ENCODE measurements at regions of chr18 and their contacts with region 1.

Region 1: GRCh38 chr18:24118750-24119577 is 19.9 kb upstream of the CABYR start:
- DNase-seq: peak; percentile 87
- ATAC-seq: peak; percentile 81
- H3K4me3 Mint-ChIP-seq: no peak overlapping the region
- H3K27ac Mint-ChIP-seq: no peak overlapping the region
- H3K4me1 Mint-ChIP-seq: peaks cover 20% of the 10 kb centered on the region
- H3K27me3 Mint-ChIP-seq: no peaks in the 10 kb centered on the region

Region 2: DNA sequence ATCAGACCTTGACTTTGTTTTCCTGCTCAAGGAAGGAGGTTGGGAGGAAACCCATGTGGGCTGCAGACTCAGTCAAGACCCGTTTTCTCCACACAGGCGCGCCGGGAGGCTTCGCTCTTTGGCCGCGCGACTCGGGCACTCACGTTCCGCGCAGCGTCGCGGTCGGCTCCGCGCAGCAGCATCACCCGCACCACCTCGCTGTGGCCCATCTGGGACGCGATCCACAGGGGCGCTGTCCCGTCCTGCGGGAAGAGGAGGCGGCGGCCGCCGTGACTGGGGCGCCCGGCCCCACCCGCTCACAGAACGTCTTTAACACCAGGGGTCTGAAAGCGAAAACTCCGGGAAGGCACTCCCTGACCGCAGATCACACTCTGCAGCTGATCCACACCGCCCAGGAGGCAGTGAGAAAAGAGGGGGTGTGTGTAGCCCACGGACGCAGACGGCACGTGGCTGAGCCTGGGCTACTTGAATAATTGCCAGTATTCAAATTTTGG is 499.5 kb before region 1 on chr18:
- CTCF ChIA-PET with region 1: no interaction called
- POLR2A ChIA-PET with region 1: no interaction called
- intact Hi-C with region 1: loop called (anchors 1 to 2 kb)
- DNase-seq: peak; percentile 29
- ATAC-seq: peak; percentile 42
- H3K4me3 Mint-ChIP-seq: peak overlapping the region; percentile 36
- H3K27ac Mint-ChIP-seq: no peak overlapping the region
- H3K4me1 Mint-ChIP-seq: peaks cover 2% of the 10 kb centered on the region
- H3K27me3 Mint-ChIP-seq: peaks cover 38% of the 10 kb centered on the region

Region 3: GRCh38 chr18:23828426-23828825 is 290.5 kb before region 1 on chr18:
- CTCF ChIA-PET with region 1: interaction called, 3 read pairs
- POLR2A ChIA-PET with region 1: no interaction called
- intact Hi-C with region 1: loop called in 1 of 2 experiments (anchors 1 kb)
- DNase-seq: peak; percentile 48
- ATAC-seq: peak; percentile 94
- H3K4me3 Mint-ChIP-seq: no peak overlapping the region
- H3K27ac Mint-ChIP-seq: no peak overlapping the region
- H3K4me1 Mint-ChIP-seq: peaks cover 46% of the 10 kb centered on the region
- H3K27me3 Mint-ChIP-seq: no peaks in the 10 kb centered on the region

Region 4: GRCh38 chr18:23964282-23965238 is 154.4 kb before region 1 on chr18:
- CTCF ChIA-PET with region 1: interaction called, 3 read pairs
- POLR2A ChIA-PET with region 1: no interaction called
- intact Hi-C with region 1: loop called (anchors 2 to 5 kb)
- DNase-seq: peak; percentile 64
- ATAC-seq: peak; percentile 82
- H3K4me3 Mint-ChIP-seq: no peak overlapping the region
- H3K27ac Mint-ChIP-seq: peak overlapping the region; percentile 58
- H3K4me1 Mint-ChIP-seq: peaks cover 45% of the 10 kb centered on the region
- H3K27me3 Mint-ChIP-seq: no peaks in the 10 kb centered on the region

Region 5: GRCh38 chr18:24019641-24020331 is 99.2 kb before region 1 on chr18:
- CTCF ChIA-PET with region 1: no interaction called
- POLR2A ChIA-PET with region 1: no interaction called
- intact Hi-C with region 1: loop called (anchors 2 kb)
- DNase-seq: peak; percentile 76
- ATAC-seq: peak; percentile 70
- H3K4me3 Mint-ChIP-seq: peak overlapping the region; percentile 55
- H3K27ac Mint-ChIP-seq: peak overlapping the region; percentile 96
- H3K4me1 Mint-ChIP-seq: peaks cover 85% of the 10 kb centered on the region
- H3K27me3 Mint-ChIP-seq: no peaks in the 10 kb centered on the region

Region 6: GRCh38 chr18:24075731-24076130 is 43.2 kb before region 1 on chr18:
- CTCF ChIA-PET with region 1: interaction called, 3 read pairs
- POLR2A ChIA-PET with region 1: no interaction called
- intact Hi-C with region 1: loop called (anchors 2 to 5 kb)
- DNase-seq: no peak
- ATAC-seq: no peak
- H3K4me3 Mint-ChIP-seq: no peak overlapping the region
- H3K27ac Mint-ChIP-seq: peak overlapping the region; percentile 81
- H3K4me1 Mint-ChIP-seq: peaks cover 44% of the 10 kb centered on the region
- H3K27me3 Mint-ChIP-seq: no peaks in the 10 kb centered on the region

Region 7: GRCh38 chr18:24402209-24402785 is 283.3 kb after region 1 on chr18:
- CTCF ChIA-PET with region 1: no interaction called
- POLR2A ChIA-PET with region 1: no interaction called
- intact Hi-C with region 1: no loop called
- DNase-seq: peak; percentile 19
- ATAC-seq: no peak
- H3K4me3 Mint-ChIP-seq: no peak overlapping the region
- H3K27ac Mint-ChIP-seq: no peak overlapping the region
- H3K4me1 Mint-ChIP-seq: peaks cover 14% of the 10 kb centered on the region
- H3K27me3 Mint-ChIP-seq: peaks cover 23% of the 10 kb centered on the region